Activated naive CD4-positive, alpha-beta T cell treated with anti-CD3 and anti-CD28 coated beads for 36 hours (primary cell): ENCODE measurements at regions of chr12 and their contacts with region 1.

Region 1: DNA sequence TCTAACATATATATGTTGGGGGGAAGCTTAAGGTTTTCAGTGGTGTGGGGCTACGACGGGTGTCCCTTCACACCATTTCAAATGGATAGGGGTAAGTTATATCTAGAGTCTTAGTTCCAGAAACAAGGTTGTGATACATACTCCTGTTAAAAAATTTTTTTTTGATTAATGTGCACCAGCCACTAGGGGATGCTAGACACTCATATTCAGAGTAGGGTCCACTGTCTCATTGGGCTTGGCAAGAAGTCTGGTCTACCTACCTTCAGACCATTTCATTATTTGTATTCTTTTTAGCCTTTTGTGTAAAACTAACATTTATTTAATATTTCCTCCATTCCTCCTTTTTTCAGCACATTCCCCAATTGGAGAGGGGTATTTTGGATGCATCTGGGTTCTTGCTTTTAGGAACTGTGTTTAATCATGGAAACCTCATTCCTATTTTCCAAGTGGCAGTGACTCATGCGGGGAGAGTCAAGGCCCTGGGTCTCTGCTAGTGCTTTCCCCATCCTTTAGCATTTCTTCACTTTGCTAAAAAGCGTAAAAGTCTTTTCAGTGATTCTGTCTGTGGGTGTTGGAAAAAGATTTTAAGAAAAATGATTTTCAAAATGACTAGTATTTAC is 33.4 kb downstream of the ANO4 start:
- DNase-seq: peak; percentile 5
- H3K4me3 Mint-ChIP-seq: no peak overlapping the region
- H3K27ac Mint-ChIP-seq: no peak overlapping the region
- H3K4me1 Mint-ChIP-seq: no peaks in the 10 kb centered on the region
- H3K27me3 Mint-ChIP-seq: peaks cover 7% of the 10 kb centered on the region

Region 2: GRCh38 chr12:101243074-101243473 is 415.1 kb after region 1 on chr12:
- CTCF ChIA-PET with region 1: no interaction called
- intact Hi-C with region 1: no loop called
- DNase-seq: no peak
- H3K4me3 Mint-ChIP-seq: no peak overlapping the region
- H3K27ac Mint-ChIP-seq: no peak overlapping the region
- H3K4me1 Mint-ChIP-seq: no peaks in the 10 kb centered on the region
- H3K27me3 Mint-ChIP-seq: peaks cover 4% of the 10 kb centered on the region

Region 3: DNA sequence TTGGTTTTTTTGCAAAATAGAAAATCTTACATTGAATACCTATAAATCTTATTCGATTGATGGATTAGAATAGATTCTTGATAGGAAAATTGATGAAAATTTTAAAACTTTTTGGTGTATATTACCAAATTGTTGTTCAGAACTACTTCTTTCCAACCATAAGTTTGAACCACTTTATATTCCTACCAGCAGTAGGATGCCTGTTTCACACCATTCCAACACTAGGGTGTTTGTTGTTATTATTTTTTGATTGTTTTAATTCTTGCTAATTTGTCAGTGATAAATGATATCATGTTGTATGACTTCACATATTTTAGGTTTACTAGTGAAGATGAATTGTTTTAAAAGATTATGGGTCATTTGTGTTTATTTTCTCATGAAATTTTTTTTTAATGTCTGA is 495.2 kb after region 1 on chr12:
- CTCF ChIA-PET with region 1: no interaction called
- intact Hi-C with region 1: loop called (anchors 1 kb)
- DNase-seq: no peak
- H3K4me3 Mint-ChIP-seq: no peak overlapping the region
- H3K27ac Mint-ChIP-seq: no peak overlapping the region
- H3K4me1 Mint-ChIP-seq: no peaks in the 10 kb centered on the region
- H3K27me3 Mint-ChIP-seq: no peaks in the 10 kb centered on the region